PC-9 (cell line): ENCODE measurements at regions of chr2 and their contacts with region 1.

Region 1: GRCh38 chr2:239927424-239927981 is 97.6 kb downstream of the NDUFA10 start:
- DNase-seq: peak; percentile 62 to 68
- H3K4me3 ChIP-seq: no peak overlapping the region
- H3K27ac ChIP-seq: no peak overlapping the region
- H3K4me1 ChIP-seq: 0 out of 2 replicates have a peak, but pooled peaks cover 3% of the 10 kb centered on the region
- H3K27me3 ChIP-seq: peaks cover 48% of the 10 kb centered on the region
- CTCF ChIP-seq: no peak

Region 2: DNA sequence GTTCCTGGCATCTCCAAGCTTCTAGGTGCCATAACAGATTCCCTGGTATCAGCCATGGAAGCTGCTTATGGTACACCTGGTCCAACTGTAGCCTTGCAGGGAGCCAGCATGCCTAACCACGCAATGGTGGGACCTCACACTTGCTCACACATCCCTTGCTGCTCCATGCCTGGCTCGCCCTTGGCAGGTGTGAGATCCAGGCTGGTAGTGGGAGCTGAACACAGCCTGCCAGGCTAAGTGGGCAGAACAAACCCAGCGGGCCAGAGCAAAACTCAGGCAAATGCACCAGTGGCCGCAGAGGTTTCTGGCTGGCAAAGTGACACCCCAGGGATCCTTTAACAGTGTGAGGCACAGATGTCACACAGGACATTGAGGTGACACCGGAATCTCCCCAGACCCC is 88.2 kb before region 1 on chr2:
- CTCF ChIA-PET with region 1: no interaction called
- POLR2A ChIA-PET with region 1: interaction called, 10 read pairs
- intact Hi-C with region 1: no loop called
- DNase-seq: no peak
- H3K4me3 ChIP-seq: no peak overlapping the region
- H3K27ac ChIP-seq: no peak overlapping the region
- H3K4me1 ChIP-seq: no peaks in the 10 kb centered on the region
- H3K27me3 ChIP-seq: peaks cover 35% of the 10 kb centered on the region
- CTCF ChIP-seq: no peak